Body of pancreas (tissue), 4 donors: ENCODE measurements at regions of chr12 and their contacts with region 1.

Region 1: GRCh38 chr12:114655934-114656749 is 27.8 kb downstream of the TBX3 start:
- DNase-seq: peak in 2 of 4 donors; percentile 29 to 42
- ATAC-seq: no peak
- H3K4me3 ChIP-seq: no peak overlapping the region
- H3K27ac ChIP-seq: no peak overlapping the region
- H3K4me1 ChIP-seq: peaks cover 6% of the 10 kb centered on the region
- H3K27me3 ChIP-seq: no peaks in the 10 kb centered on the region
- CTCF ChIP-seq: no peak
- POLR2A ChIP-seq: no peak

Region 2: DNA sequence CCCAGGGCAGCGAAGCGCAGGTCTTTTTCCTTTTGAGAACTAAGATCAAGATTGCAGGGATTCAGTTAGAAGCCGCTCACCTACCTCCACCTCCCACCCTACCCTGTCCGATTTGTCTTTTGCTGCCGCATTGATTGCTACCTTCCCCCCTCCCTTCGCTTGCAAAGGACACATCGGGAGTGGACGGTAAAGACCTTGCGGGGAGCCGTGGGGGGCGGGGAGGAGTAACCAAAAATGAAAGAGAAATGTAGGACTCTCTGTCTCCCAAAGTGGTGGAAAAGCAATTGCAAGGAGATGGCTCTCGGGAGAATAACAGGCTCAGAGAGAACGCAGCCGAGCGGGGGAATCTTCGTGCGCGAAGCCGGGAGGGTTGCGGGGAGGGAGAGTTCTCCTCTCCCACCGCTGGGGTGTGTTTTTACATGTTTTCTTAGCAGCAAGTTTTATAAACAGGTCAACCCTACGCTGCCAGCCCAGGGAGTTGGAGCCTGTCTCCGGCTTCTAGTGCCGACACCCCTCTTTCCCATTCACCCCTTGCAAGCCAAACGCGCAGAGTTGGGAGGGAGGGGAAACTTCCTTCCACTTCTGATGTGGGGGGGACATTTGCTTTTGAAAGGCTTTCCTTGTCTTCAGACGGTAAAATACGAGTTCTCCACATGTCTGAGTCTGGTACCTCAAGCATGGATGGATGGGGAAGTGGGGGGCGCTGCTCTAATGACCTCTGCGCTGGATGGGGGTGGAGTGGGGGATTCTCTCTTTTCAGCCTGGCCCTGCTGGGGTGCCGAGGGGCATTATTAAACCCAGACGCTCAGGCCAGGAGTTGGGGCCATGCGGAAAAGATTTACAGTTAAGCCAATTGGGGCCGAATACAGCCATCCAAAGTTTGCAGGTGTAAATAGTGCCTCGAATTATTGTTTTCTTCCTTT is 36.7 kb after region 1 on chr12:
- intact Hi-C with region 1: no loop called
- DNase-seq: no peak
- ATAC-seq: no peak
- H3K4me3 ChIP-seq: no peak overlapping the region
- H3K27ac ChIP-seq: no peak overlapping the region
- H3K4me1 ChIP-seq: peaks cover 13% of the 10 kb centered on the region
- H3K27me3 ChIP-seq: peaks cover 0 to 23% of the 10 kb centered on the region in 2 donors
- CTCF ChIP-seq: no peak
- POLR2A ChIP-seq: no peak

Region 3: GRCh38 chr12:115916910-115917668 is 1260.9 kb after region 1 on chr12:
- intact Hi-C with region 1: loop called (anchors 5 kb)
- DNase-seq: peak; percentile 61 to 82 (median 80)
- ATAC-seq: peak; percentile 89
- H3K4me3 ChIP-seq: no peak overlapping the region
- H3K27ac ChIP-seq: no peak overlapping the region
- H3K4me1 ChIP-seq: peaks cover 6% of the 10 kb centered on the region
- H3K27me3 ChIP-seq: no peaks in the 10 kb centered on the region
- CTCF ChIP-seq: peak; percentile 86 to 98 (median 97)
- POLR2A ChIP-seq: no peak